ENCODE measurements at regions of chr13 and their contacts with region 1.

Region 1: DNA sequence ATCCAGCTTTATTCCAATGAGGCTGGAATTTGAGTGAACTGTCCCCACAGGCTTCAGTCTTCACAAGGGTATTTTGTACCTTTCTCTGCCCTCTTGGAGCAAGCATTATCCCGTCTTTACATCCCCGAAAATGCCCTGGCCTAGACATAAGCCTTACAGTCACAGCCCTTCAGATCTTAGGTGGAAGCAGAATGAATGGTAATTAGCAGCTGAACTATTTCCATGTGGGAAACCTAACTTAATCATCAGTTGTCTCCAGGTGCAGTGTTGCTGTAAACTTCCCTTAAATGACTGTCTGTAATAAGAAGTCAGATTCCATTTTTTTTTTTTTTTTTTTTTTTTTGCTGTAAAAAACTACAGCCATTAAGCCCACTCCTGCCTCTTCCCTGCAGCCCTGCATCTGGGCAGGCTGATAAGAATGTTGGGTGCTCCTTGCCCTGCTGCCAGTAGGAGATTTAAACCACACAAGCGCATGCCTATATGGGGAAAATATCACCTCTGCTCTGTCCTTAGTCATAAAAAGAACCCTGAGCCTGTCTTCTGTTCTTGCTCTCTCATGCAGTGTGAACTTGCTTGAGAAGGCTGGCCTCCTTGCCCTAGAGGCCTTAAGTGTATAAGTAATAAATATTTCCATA is 426.8 kb upstream of the SLITRK5 start:
- DNase-seq: no peak
- H3K4me3 ChIP-seq: no peak overlapping the region
- H3K27ac ChIP-seq: no peak overlapping the region
- H3K4me1 ChIP-seq: no peaks in the 10 kb centered on the region
- H3K27me3 ChIP-seq: peaks cover 1% of the 10 kb centered on the region
- CTCF ChIP-seq: no peak

Region 2: GRCh38 chr13:87042946-87043345 is 201.4 kb before region 1 on chr13:
- CTCF ChIA-PET with region 1: no interaction called
- dilution Hi-C with region 1: no loop called
- in situ Hi-C with region 1: no loop called
- intact Hi-C with region 1: no loop called
- DNase-seq: no peak
- H3K4me3 ChIP-seq: no peak overlapping the region
- H3K27ac ChIP-seq: no peak overlapping the region
- H3K4me1 ChIP-seq: no peaks in the 10 kb centered on the region
- H3K27me3 ChIP-seq: no peaks in the 10 kb centered on the region
- CTCF ChIP-seq: no peak

Region 3: GRCh38 chr13:87287721-87288120 is 43.3 kb after region 1 on chr13:
- CTCF ChIA-PET with region 1: no interaction called
- dilution Hi-C with region 1: no loop called
- in situ Hi-C with region 1: no loop called
- intact Hi-C with region 1: loop called (anchors 2 kb)
- DNase-seq: no peak
- H3K4me3 ChIP-seq: no peak overlapping the region
- H3K27ac ChIP-seq: no peak overlapping the region
- H3K4me1 ChIP-seq: no peaks in the 10 kb centered on the region
- H3K27me3 ChIP-seq: no peaks in the 10 kb centered on the region
- CTCF ChIP-seq: no peak